WTC11 (cell line): ENCODE measurements at regions of chr2 and their contacts with region 1.

Region 1: DNA sequence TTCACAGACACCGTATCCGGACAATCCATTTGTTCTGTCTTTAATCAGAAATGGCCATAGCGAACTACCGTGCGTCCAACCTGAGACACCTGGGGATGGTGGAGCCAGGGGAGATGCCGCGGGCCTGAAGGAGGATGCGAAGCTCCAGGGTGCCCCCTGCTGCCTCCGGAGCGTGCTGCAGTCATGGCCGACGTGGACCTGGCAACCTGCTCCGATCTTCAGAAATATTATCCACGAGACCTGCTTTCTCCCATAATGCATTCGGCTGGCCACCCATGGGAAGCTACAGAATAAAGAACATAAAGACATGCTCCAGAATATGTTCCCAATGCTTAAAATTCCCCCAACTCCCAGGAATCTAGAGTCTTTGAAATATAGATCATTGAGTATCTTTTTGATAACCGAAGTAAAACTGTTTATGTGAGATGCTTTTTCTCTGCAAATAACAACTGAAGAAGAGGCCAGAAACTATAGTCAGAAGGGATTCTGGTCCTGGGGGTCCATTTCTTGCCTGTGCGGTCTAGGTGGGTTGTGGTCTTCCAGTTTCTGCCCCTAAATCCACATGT is 30.7 kb upstream of the SLC66A3 start:
- DNase-seq: peak; percentile 90
- ATAC-seq: peak; percentile 95
- H3K4me3 Mint-ChIP-seq: no peak overlapping the region
- H3K27ac Mint-ChIP-seq: no peak overlapping the region
- H3K4me1 Mint-ChIP-seq: peaks cover 18% of the 10 kb centered on the region; the same call in 1 of the 2 replicates
- H3K27me3 Mint-ChIP-seq: peaks cover 6% of the 10 kb centered on the region; the same call in 1 of the 2 replicates
- CTCF ChIP-seq: peak; percentile 83

Region 2: DNA sequence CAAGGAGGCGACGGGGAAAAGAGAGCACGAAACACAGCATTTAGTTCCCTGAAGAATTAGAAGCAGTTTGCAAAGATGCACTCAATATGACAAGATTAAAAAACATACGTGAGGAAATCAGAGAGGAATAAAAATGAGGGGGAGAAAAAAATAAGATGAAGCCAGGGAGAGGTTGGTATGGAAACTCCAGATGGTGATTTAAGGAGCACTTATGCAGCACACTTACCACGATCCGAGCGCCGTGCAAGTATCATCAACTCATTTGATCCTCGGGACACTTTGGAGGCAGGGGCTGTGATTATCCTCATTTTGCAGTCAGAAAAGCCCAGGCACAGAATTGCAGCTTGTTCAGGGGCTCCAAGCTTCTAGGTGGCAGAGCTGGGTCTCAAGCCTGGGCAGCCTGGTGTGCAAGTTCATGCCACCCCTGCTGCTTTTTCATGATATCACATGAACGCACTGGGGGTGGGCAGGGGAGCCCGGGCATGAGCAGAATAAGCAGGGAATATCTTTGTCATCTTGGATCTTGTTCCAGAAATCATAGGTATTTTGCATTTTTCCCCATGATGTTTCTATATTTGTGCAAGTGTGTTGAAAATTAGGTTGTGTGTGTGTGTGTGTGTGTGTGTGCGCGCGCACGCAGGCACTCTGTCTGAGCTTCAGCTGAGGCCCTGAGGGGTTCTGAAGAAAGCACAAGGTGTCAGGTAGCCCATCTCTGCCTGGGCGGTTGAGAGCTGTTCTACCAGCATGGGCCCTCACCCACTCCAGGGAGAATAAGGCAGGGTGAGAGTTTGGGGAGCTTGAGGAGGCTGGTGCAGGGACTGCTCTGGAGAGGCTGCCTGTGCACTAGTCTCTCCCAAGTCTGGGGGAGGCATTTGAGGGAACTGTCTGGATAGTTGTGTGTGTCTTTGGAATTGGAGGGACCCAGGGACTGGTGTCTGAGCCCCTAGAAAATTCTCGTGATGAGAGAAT is 287.0 kb before region 1 on chr2:
- CTCF ChIA-PET with region 1: interaction called, 231 read pairs
- POLR2A ChIA-PET with region 1: no interaction called
- DNase-seq: no peak
- ATAC-seq: no peak
- H3K4me3 Mint-ChIP-seq: no peak overlapping the region
- H3K27ac Mint-ChIP-seq: no peak overlapping the region
- H3K4me1 Mint-ChIP-seq: peaks cover under 1% of the 10 kb centered on the region; the same call in 1 of the 2 replicates
- H3K27me3 Mint-ChIP-seq: peaks cover 16% of the 10 kb centered on the region
- CTCF ChIP-seq: no peak

Region 3: DNA sequence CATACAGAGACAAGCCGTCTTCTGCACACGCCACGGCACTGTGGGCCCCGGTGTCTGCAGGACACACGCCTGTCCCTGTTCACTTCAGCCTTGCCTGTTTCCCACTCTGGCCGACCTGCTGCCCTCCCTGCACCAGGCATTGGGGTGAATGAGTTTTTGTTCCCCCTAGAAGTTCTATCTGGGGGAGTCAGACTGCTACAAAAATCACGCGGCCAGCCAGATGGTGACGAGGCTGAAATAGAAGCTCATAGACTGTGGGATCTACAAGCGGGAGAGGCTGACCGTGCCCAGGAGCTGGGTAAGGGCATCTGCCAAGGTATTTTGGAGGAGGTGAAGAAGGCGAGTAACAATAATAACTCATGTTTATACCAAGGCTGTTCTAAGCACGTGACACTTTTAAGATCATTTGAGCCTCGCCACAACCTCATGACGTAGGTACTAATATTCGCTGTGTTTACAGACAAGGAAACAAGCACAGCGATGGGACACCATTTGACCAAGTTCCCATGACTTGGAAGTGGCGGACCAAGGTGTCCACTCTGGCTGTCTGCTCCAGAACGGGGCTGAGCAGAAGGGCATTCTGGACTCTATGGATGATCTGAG is 159.2 kb before region 1 on chr2:
- CTCF ChIA-PET with region 1: no interaction called
- POLR2A ChIA-PET with region 1: no interaction called
- DNase-seq: no peak
- ATAC-seq: no peak
- H3K4me3 Mint-ChIP-seq: no peak overlapping the region
- H3K27ac Mint-ChIP-seq: no peak overlapping the region
- H3K4me1 Mint-ChIP-seq: peaks cover 16% of the 10 kb centered on the region
- H3K27me3 Mint-ChIP-seq: no peaks in the 10 kb centered on the region; the same call in 1 of the 2 replicates
- CTCF ChIP-seq: no peak

Region 4: DNA sequence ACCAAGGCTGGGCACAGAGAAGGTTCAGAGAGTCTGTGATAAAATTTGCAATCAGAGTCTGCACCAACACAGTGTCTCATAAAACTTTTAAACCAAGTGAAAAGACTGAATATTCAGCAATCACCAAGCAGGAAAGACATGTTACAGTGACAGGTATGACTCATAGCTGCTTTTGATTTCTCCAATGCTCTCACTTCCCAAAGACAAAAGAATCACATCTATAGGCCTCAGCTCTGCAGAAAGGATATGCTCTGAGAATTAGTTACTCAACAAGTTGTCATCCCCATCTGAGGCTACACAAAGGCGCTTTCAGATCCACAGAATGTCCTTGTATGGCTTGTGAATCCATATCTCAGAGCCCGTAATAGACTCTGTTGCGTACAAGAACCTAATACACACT is 120.4 kb before region 1 on chr2:
- CTCF ChIA-PET with region 1: no interaction called
- POLR2A ChIA-PET with region 1: no interaction called
- DNase-seq: no peak
- ATAC-seq: no peak
- H3K4me3 Mint-ChIP-seq: no peak overlapping the region
- H3K27ac Mint-ChIP-seq: no peak overlapping the region
- H3K4me1 Mint-ChIP-seq: peaks cover 25% of the 10 kb centered on the region
- H3K27me3 Mint-ChIP-seq: no peaks in the 10 kb centered on the region
- CTCF ChIP-seq: no peak

Region 5: DNA sequence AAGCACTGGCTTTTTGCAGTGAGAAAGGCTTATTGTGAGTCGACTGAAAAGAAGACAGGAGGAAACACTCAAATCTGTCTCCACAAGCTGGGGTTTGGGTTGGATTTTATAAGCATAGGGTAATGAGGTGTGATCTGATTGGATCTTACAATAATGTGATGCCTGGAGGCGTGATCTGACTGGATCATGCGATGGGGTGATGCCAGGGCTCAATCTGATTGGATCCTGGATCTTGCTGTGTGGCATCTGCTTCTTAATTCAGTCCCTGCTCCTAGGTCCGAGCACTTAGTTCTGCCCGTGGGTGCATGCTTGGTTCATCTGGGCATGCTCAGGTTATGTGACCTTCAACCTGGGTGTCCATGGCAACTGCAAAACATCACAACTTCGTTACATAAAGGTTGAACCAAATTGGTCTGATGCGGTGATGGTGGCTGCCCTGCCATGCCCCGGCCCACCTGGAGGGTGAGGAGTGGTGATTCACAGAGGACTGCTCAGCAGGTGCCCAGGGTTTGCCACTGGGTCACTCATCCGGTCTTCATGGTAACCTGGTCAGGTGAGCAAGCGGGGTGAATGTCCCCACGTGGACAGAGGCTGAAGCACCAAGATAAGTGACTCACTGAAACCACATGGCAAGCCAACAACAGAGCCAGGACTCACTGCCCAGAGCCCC is 101.8 kb before region 1 on chr2:
- CTCF ChIA-PET with region 1: interaction called, 10 read pairs
- POLR2A ChIA-PET with region 1: no interaction called
- DNase-seq: no peak
- ATAC-seq: no peak
- H3K4me3 Mint-ChIP-seq: no peak overlapping the region
- H3K27ac Mint-ChIP-seq: no peak overlapping the region
- H3K4me1 Mint-ChIP-seq: peaks cover 25% of the 10 kb centered on the region
- H3K27me3 Mint-ChIP-seq: no peaks in the 10 kb centered on the region
- CTCF ChIP-seq: no peak

Region 6: GRCh38 chr2:11073251-11073650 is 51.3 kb before region 1 on chr2:
- CTCF ChIA-PET with region 1: interaction called, 11 read pairs
- POLR2A ChIA-PET with region 1: no interaction called
- DNase-seq: peak; percentile 85
- ATAC-seq: peak; percentile 97
- H3K4me3 Mint-ChIP-seq: no peak overlapping the region
- H3K27ac Mint-ChIP-seq: peak overlapping the region; percentile 80; the same call in 1 of the 2 replicates
- H3K4me1 Mint-ChIP-seq: peaks cover 28% of the 10 kb centered on the region
- H3K27me3 Mint-ChIP-seq: no peaks in the 10 kb centered on the region; the same call in 1 of the 2 replicates
- CTCF ChIP-seq: peak; percentile 65